Naive thymus-derived CD8-positive, alpha-beta T cell (primary cell): ENCODE measurements at regions of chr3 and their contacts with region 1.

Region 1: DNA sequence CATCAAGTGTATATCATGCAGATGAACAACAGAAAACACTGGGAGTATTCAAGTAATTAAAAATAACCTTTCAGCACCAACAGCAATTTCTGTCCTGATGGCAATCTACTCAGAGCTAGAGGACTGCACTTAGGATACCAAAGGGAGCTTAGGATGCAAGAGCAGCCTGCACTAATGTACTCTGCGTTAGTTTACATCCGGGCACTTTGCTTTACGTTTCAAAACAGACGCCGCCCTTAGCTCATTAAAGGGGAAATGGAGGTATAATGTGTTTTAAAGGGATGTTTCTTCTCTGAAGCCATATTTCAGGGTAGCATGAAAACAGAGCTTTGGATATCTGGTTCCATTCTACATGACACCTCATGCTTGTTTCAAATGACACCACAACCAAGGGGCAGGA is 14.0 kb upstream of the B3GNT5 start:
- DNase-seq: no peak
- ATAC-seq: no peak
- H3K4me3 Mint-ChIP-seq: no peak overlapping the region
- H3K27ac Mint-ChIP-seq: no peak overlapping the region
- H3K4me1 Mint-ChIP-seq: no peaks in the 10 kb centered on the region
- H3K27me3 Mint-ChIP-seq: peaks cover 3 to 14% (median 12%) of the 10 kb centered on the region in 5 donors

Region 2: GRCh38 chr3:183844606-183845005 is 605.6 kb after region 1 on chr3:
- POLR2A ChIA-PET with region 1: interaction called, 10 read pairs
- DNase-seq: no peak
- ATAC-seq: no peak
- H3K4me3 Mint-ChIP-seq: no peak overlapping the region
- H3K27ac Mint-ChIP-seq: peak overlapping the region in 1 of 10 donors; percentile 31
- H3K4me1 Mint-ChIP-seq: no peaks in the 10 kb centered on the region
- H3K27me3 Mint-ChIP-seq: no peaks in the 10 kb centered on the region

Region 3: DNA sequence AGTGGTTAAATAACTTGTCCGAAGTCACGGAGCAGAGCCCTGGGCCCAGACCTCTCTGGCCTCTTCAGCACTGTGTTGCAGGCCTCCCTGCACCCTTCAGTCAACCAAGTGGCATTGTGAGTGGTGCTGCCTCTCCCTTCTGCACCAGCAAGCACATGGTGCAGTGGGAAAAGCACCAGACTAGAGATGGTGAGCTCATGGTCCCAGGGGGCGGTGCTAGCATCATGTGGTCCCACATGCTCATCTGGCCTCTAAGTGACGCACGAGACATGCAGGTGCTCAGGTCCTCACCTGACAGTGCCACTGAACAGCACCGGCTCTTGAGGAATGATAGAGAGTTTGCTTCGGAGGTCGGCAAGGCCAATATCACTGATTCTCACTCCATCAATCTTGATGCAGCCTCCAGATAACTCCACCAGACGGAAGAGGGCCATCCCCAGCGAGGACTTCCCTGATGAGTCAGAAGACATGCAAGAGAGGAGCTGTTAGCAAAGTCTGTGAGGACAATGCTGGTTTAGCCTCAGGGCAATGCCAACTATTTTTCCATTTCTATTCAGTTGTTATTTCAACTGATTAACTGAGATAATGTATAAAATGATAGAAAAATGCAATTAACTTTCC is 698.7 kb after region 1 on chr3:
- POLR2A ChIA-PET with region 1: no interaction called
- DNase-seq: no peak
- ATAC-seq: no peak
- H3K4me3 Mint-ChIP-seq: no peak overlapping the region
- H3K27ac Mint-ChIP-seq: no peak overlapping the region
- H3K4me1 Mint-ChIP-seq: no peaks in the 10 kb centered on the region
- H3K27me3 Mint-ChIP-seq: no peaks in the 10 kb centered on the region